B cell (primary cell): ENCODE measurements at regions of chr3 and their contacts with region 1.

Region 1: DNA sequence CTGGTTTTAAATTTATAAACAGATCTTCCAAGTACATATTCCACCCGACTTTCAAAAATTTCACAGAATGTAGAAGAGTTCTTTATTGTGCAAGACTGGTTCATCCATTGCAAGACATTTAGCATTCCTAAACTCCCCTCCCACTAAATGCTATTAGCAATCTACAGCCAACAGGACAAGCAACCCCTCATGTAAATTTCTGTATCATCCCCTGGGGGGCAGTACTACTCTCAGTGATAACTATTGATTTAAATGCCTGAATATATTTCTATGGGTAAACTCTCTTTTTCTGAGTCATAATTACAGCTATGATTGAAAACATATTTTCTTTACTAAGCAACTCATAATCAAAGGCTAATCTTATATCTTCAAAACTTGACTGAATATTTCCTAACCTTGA is 10.7 kb upstream of the SLC15A2 start:
- DNase-seq: peak; percentile 27
- ATAC-seq: no peak
- H3K4me3 ChIP-seq: no peak overlapping the region
- H3K4me3 Mint-ChIP-seq: no peak overlapping the region
- H3K27ac ChIP-seq: no peak overlapping the region
- H3K27ac Mint-ChIP-seq: peak overlapping the region; percentile 1
- H3K4me1 ChIP-seq: no peaks in the 10 kb centered on the region
- H3K4me1 Mint-ChIP-seq: peaks cover 16% of the 10 kb centered on the region
- H3K27me3 ChIP-seq: no peaks in the 10 kb centered on the region
- H3K27me3 Mint-ChIP-seq: no peaks in the 10 kb centered on the region
- CTCF ChIP-seq: peak; percentile 62

Region 2: GRCh38 chr3:121871430-121871829 is 12.1 kb before region 1 on chr3:
- CTCF ChIA-PET with region 1: interaction called, 10 read pairs
- POLR2A ChIA-PET with region 1: no interaction called
- intact Hi-C with region 1: no loop called
- DNase-seq: peak; percentile 11
- ATAC-seq: peak; percentile 41
- H3K4me3 ChIP-seq: no peak overlapping the region
- H3K4me3 Mint-ChIP-seq: no peak overlapping the region
- H3K27ac ChIP-seq: no peak overlapping the region
- H3K27ac Mint-ChIP-seq: peak overlapping the region; percentile 16
- H3K4me1 ChIP-seq: peaks cover 6 to 28% of the 10 kb centered on the region in 2 donors
- H3K4me1 Mint-ChIP-seq: peaks cover 43% of the 10 kb centered on the region
- H3K27me3 ChIP-seq: no peaks in the 10 kb centered on the region
- H3K27me3 Mint-ChIP-seq: no peaks in the 10 kb centered on the region
- CTCF ChIP-seq: no peak

Region 3: GRCh38 chr3:122092460-122093165 is 209.1 kb after region 1 on chr3:
- CTCF ChIA-PET with region 1: interaction called, 12 read pairs
- POLR2A ChIA-PET with region 1: interaction called, 5 read pairs
- intact Hi-C with region 1: loop called (anchors 1 kb)
- DNase-seq: peak; percentile 40
- ATAC-seq: peak; percentile 34
- H3K4me3 ChIP-seq: no peak overlapping the region
- H3K4me3 Mint-ChIP-seq: peak overlapping the region; percentile 74
- H3K27ac ChIP-seq: peak overlapping the region in 1 of 2 donors; percentile 60
- H3K27ac Mint-ChIP-seq: peak overlapping the region; percentile 81
- H3K4me1 ChIP-seq: peaks cover 23 to 27% of the 10 kb centered on the region in 2 donors
- H3K4me1 Mint-ChIP-seq: peaks cover 37% of the 10 kb centered on the region
- H3K27me3 ChIP-seq: no peaks in the 10 kb centered on the region
- H3K27me3 Mint-ChIP-seq: no peaks in the 10 kb centered on the region
- CTCF ChIP-seq: peak; percentile 36

Region 4: GRCh38 chr3:122101646-122102045 is 218.1 kb after region 1 on chr3:
- CTCF ChIA-PET with region 1: interaction called, 13 read pairs
- POLR2A ChIA-PET with region 1: no interaction called
- intact Hi-C with region 1: no loop called
- DNase-seq: peak; percentile 78
- ATAC-seq: peak; percentile 59
- H3K4me3 ChIP-seq: no peak overlapping the region
- H3K4me3 Mint-ChIP-seq: peak overlapping the region; percentile 82
- H3K27ac ChIP-seq: no peak overlapping the region
- H3K27ac Mint-ChIP-seq: peak overlapping the region; percentile 11
- H3K4me1 ChIP-seq: peaks cover 6 to 13% of the 10 kb centered on the region in 2 donors
- H3K4me1 Mint-ChIP-seq: peaks cover 24% of the 10 kb centered on the region
- H3K27me3 ChIP-seq: no peaks in the 10 kb centered on the region
- H3K27me3 Mint-ChIP-seq: no peaks in the 10 kb centered on the region
- CTCF ChIP-seq: peak; percentile 73

Region 5: DNA sequence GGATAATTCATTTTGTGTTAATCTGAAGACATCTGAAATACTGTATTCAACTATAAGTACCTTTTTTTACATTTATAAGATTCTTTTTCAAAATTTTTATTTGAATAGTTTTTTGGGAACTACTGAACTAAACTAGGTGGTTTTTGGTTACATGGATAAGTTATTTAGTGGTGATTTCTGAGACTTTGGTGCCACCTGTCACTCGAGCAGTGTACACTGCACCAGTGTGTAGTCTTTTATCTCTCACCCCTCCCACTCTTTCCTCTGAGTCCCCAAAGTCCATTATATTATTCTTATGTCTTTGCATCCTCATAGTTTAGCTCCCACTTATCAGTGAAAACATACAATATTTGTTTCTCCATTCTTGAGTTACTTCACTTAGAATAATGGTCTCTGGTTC is 229.2 kb after region 1 on chr3:
- CTCF ChIA-PET with region 1: no interaction called
- POLR2A ChIA-PET with region 1: no interaction called
- intact Hi-C with region 1: loop called (anchors 2 kb)
- DNase-seq: peak; percentile 17
- ATAC-seq: no peak
- H3K4me3 ChIP-seq: no peak overlapping the region
- H3K4me3 Mint-ChIP-seq: no peak overlapping the region
- H3K27ac ChIP-seq: no peak overlapping the region
- H3K27ac Mint-ChIP-seq: no peak overlapping the region
- H3K4me1 ChIP-seq: peaks cover 4% of the 10 kb centered on the region in 2 donors
- H3K4me1 Mint-ChIP-seq: peaks cover 8% of the 10 kb centered on the region
- H3K27me3 ChIP-seq: no peaks in the 10 kb centered on the region
- H3K27me3 Mint-ChIP-seq: no peaks in the 10 kb centered on the region
- CTCF ChIP-seq: no peak